ENCODE measurements at regions of chr11 and their contacts with region 1.

Region 1: GRCh38 chr11:27698872-27699474 is 1.3 kb downstream of the BDNF start:
- DNase-seq: peak; percentile 49 to 86
- H3K4me3 ChIP-seq: peak overlapping the region; percentile 64; the same call in 1 of the 2 replicates
- H3K27ac ChIP-seq: no peak overlapping the region
- H3K4me1 ChIP-seq: peaks cover 23% of the 10 kb centered on the region
- H3K27me3 ChIP-seq: peaks cover 33% of the 10 kb centered on the region
- CTCF ChIP-seq: peak; percentile 88

Region 2: DNA sequence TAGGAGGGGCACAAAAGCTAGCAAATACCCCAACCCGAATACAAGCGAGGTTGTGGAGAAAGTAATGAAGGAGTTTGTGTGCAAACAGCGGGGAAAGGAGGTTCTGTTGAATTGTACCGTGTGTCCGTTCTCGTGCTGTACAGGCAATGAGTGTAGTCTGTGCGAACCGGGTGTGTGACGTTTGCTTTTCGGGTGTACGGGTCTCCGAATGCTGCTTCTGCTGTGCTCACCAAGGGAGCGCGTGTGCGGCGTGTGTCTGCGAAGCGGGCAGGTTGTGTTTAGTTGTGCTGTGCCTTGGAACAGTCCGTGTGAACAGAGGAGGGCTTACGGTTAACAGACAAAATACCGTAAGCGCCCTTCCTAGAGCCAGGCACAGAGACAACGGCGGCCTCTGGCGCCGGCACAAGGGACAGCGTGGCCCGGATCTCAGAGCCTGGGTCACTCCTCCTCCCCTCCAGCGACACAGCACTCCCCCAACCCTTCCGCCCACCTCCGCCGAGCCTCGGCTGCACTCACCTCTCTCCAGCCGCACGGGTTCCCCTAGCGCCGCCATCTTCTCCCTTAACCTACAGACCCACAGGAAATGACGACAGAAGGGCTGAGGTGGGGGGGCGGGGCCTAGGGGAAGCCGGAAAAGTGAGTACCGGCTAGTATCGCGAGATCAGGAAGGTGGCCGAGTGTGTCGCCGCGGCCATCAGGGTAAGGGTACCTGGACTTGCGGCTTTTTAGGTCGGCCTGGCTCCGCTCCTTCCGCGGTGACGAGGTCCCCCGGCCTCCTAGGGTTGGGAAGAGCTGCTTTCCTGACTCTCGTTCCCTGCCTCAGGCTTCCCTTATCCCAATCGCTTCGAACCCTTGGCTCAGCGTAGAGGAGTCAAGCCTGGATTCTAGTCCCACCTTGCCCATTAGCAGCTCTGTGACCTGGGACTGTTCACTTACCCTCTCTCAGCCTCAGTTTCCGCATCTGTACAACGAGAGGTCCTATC is 192.5 kb before region 1 on chr11 and contains the start of gene LIN7C:
- CTCF ChIA-PET with region 1: no interaction called
- POLR2A ChIA-PET with region 1: no interaction called
- intact Hi-C with region 1: loop called (anchors 5 kb)
- DNase-seq: peak; percentile 79 to 88
- H3K4me3 ChIP-seq: peak within 1 kb of the TSS; percentile 94
- H3K27ac ChIP-seq: peak within 1 kb of the TSS; percentile 67
- H3K4me1 ChIP-seq: peaks cover 8% of the 10 kb centered on the region
- H3K27me3 ChIP-seq: no peaks in the 10 kb centered on the region
- CTCF ChIP-seq: no peak
- total RNA-seq, gene LIN7C: 21.2 and 30.6 TPM in 2 replicates

Region 3: DNA sequence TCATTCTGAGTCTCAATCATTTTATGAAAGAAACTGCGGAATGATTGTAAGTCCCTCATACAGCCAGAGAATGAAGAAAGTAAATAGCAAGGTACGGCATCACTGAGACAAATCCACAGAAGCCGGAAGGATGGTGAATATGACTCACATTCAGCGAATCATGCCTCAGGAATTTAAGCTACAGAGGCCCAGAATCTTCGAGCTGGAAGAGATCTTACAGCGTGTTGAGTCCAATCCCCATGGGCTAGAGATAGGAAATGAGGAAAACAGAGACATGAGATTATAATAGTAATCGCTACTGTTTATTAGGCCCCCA is 235.8 kb after region 1 on chr11:
- CTCF ChIA-PET with region 1: no interaction called
- POLR2A ChIA-PET with region 1: interaction called, 9 read pairs
- intact Hi-C with region 1: loop called (anchors 5 kb)
- DNase-seq: peak; percentile 45 to 66
- H3K4me3 ChIP-seq: no peak overlapping the region
- H3K27ac ChIP-seq: peak overlapping the region; percentile 51
- H3K4me1 ChIP-seq: peaks cover 13% of the 10 kb centered on the region; the same call in 1 of the 2 replicates
- H3K27me3 ChIP-seq: no peaks in the 10 kb centered on the region
- CTCF ChIP-seq: no peak

Region 4: DNA sequence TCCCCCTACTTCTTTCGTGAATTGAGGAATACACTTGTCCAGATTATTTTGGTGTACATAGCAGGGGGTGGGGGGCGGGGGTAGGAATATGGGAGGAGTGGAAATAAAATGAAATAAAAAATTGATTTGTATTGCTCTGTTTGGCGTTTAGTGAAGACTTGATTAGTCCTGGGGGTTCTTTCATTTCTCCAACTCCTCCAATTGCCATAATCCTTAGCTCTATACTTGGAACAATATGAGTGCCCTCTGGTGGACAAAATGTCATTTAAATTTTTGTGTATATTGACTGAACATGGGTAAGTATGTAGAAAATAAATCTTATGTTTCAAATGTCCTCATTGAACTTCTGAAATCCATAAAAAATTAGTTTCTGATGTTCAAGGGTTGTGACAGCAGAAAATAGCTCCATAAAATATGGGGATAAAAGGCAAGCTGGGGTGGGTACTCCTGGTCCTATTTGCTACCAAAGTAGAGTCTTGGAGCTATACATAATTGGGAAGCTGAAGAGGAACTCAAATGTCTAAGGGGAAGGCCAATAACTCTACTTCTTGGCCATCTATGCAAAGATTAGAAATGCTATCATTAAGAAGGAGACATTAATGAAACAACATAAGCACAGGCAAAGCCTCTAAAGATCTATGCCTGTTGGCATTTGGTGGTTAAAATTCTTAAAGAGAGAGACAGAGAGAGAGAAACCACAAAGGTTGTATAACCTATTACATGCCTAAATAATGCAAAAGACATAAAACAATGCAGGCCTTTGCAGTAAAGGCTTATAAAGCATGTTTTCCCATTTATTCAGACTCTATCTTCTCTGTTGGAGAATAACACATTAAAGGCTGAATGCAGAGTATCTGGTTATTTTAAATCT is 830.8 kb after region 1 on chr11:
- CTCF ChIA-PET with region 1: no interaction called
- POLR2A ChIA-PET with region 1: interaction called, 3 read pairs
- intact Hi-C with region 1: loop called (anchors 10 kb)
- DNase-seq: no peak
- H3K4me3 ChIP-seq: no peak overlapping the region
- H3K27ac ChIP-seq: no peak overlapping the region
- H3K4me1 ChIP-seq: no peaks in the 10 kb centered on the region
- H3K27me3 ChIP-seq: no peaks in the 10 kb centered on the region
- CTCF ChIP-seq: peak; percentile 76

Region 5: GRCh38 chr11:28596816-28597215 is 897.8 kb after region 1 on chr11:
- CTCF ChIA-PET with region 1: no interaction called
- POLR2A ChIA-PET with region 1: no interaction called
- intact Hi-C with region 1: no loop called
- DNase-seq: no peak
- H3K4me3 ChIP-seq: no peak overlapping the region
- H3K27ac ChIP-seq: no peak overlapping the region
- H3K4me1 ChIP-seq: no peaks in the 10 kb centered on the region
- H3K27me3 ChIP-seq: no peaks in the 10 kb centered on the region
- CTCF ChIP-seq: no peak

Region 6: GRCh38 chr11:28836285-28837081 is 1137.5 kb after region 1 on chr11:
- CTCF ChIA-PET with region 1: no interaction called
- POLR2A ChIA-PET with region 1: interaction called, 8 read pairs
- intact Hi-C with region 1: loop called (anchors 5 kb)
- DNase-seq: peak; percentile 35 to 61
- H3K4me3 ChIP-seq: no peak overlapping the region
- H3K27ac ChIP-seq: peak overlapping the region; percentile 43; the same call in 1 of the 2 replicates
- H3K4me1 ChIP-seq: 0 out of 2 replicates have a peak, but pooled peaks cover 10% of the 10 kb centered on the region
- H3K27me3 ChIP-seq: no peaks in the 10 kb centered on the region
- CTCF ChIP-seq: no peak

Region 7: GRCh38 chr11:29129850-29130249 is 1430.9 kb after region 1 on chr11:
- CTCF ChIA-PET with region 1: interaction called, 25 read pairs
- POLR2A ChIA-PET with region 1: no interaction called
- intact Hi-C with region 1: no loop called
- DNase-seq: no peak
- H3K4me3 ChIP-seq: no peak overlapping the region
- H3K27ac ChIP-seq: no peak overlapping the region
- H3K4me1 ChIP-seq: no peaks in the 10 kb centered on the region
- H3K27me3 ChIP-seq: no peaks in the 10 kb centered on the region
- CTCF ChIP-seq: no peak

Region 8: GRCh38 chr11:29328961-29329441 is 1630.0 kb after region 1 on chr11:
- CTCF ChIA-PET with region 1: interaction called, 11 read pairs
- POLR2A ChIA-PET with region 1: interaction called, 9 read pairs
- intact Hi-C with region 1: loop called (anchors 1 kb)
- DNase-seq: peak in 1 of 2 experiments; percentile 40
- H3K4me3 ChIP-seq: no peak overlapping the region
- H3K27ac ChIP-seq: no peak overlapping the region
- H3K4me1 ChIP-seq: no peaks in the 10 kb centered on the region
- H3K27me3 ChIP-seq: no peaks in the 10 kb centered on the region
- CTCF ChIP-seq: peak; percentile 73